WTC11 (cell line): ENCODE measurements at regions of chr10 and their contacts with region 1.

Region 1: GRCh38 chr10:117174439-117175214 is 22.7 kb upstream of the KCNK18 start:
- DNase-seq: peak; percentile 93
- ATAC-seq: peak; percentile 82
- H3K4me3 Mint-ChIP-seq: peak overlapping the region; percentile 78
- H3K27ac Mint-ChIP-seq: no peak overlapping the region
- H3K4me1 Mint-ChIP-seq: peaks cover 14% of the 10 kb centered on the region
- H3K27me3 Mint-ChIP-seq: peaks cover 95% of the 10 kb centered on the region
- CTCF ChIP-seq: peak; percentile 81

Region 2: GRCh38 chr10:116690356-116691322 is 484.0 kb before region 1 on chr10:
- CTCF ChIA-PET with region 1: interaction called, 21 read pairs
- POLR2A ChIA-PET with region 1: no interaction called
- DNase-seq: no peak
- ATAC-seq: peak; percentile 47
- H3K4me3 Mint-ChIP-seq: peak overlapping the region; percentile 46
- H3K27ac Mint-ChIP-seq: peak overlapping the region; percentile 19
- H3K4me1 Mint-ChIP-seq: peaks cover 58% of the 10 kb centered on the region
- H3K27me3 Mint-ChIP-seq: no peaks in the 10 kb centered on the region
- CTCF ChIP-seq: no peak

Region 3: DNA sequence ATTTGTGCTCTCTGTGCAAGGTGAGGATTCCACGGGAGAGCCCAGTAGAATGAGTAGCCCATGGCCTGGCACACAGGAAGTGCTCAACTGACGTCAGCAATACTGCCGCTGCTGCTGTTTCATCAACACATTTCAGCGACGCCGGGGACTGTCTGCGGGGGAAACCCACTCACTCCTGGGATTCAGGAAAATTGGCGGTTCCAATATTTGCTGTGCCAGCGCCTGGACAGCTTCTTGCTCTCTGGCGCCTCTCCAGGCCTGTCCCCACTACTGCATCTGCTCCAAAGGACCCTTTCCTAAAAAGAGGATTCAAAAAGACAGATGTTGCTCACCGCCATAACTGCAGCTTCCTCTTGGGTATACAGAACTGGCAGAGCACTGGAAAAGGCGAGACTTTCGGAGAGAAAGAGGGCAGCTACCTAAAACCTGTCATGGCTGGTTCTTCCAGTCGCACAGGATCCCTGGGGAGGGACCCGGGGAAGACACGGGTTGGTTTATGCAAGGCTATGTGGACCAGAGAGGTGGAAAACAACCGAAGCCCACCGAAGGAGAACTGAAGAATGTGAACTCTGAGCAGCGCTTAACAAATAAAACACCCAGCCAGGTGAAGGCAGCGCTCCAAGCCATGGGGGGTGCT is 365.0 kb before region 1 on chr10:
- CTCF ChIA-PET with region 1: interaction called, 30 read pairs
- POLR2A ChIA-PET with region 1: no interaction called
- DNase-seq: peak; percentile 75
- ATAC-seq: peak; percentile 93
- H3K4me3 Mint-ChIP-seq: no peak overlapping the region
- H3K27ac Mint-ChIP-seq: no peak overlapping the region
- H3K4me1 Mint-ChIP-seq: peaks cover 19% of the 10 kb centered on the region
- H3K27me3 Mint-ChIP-seq: no peaks in the 10 kb centered on the region
- CTCF ChIP-seq: peak; percentile 89

Region 4: DNA sequence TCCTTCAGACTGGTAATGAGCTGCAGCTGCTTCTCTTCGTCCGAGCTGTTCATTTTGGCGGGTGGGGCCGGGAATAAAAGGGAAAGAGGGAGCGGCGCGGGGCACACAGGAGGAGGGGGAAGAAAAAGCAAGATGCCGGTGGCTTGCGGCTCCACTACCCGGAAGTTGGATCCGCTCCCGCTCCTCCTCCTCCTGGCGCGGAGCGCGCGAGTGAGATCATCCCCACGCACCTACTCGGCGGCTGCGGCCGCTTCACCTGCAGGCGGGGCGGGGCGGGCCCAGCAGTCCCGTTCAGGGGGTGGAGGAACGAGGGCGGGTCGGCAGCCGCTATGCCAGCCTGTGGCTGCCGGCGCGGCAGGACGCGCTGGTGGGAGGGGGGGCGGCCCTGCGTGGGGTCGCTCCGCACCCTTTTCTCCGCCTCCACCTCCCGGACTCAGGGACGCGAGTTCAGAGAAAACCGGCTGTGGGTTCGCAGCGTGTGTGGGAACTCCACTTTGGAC is 169.6 kb before region 1 on chr10 and contains the start of gene SHTN1:
- CTCF ChIA-PET with region 1: interaction called, 10 read pairs
- POLR2A ChIA-PET with region 1: no interaction called
- DNase-seq: peak; percentile 65
- ATAC-seq: peak; percentile 71
- H3K4me3 Mint-ChIP-seq: peak within 1 kb of the TSS; percentile 76
- H3K27ac Mint-ChIP-seq: no peak within 1 kb of the TSS
- H3K4me1 Mint-ChIP-seq: peaks cover 14% of the 10 kb centered on the region
- H3K27me3 Mint-ChIP-seq: peaks cover 21% of the 10 kb centered on the region
- CTCF ChIP-seq: no peak
- total RNA-seq, gene SHTN1: 9.9 to 11.2 TPM (median 11.0 TPM) in 3 replicates

Region 5: DNA sequence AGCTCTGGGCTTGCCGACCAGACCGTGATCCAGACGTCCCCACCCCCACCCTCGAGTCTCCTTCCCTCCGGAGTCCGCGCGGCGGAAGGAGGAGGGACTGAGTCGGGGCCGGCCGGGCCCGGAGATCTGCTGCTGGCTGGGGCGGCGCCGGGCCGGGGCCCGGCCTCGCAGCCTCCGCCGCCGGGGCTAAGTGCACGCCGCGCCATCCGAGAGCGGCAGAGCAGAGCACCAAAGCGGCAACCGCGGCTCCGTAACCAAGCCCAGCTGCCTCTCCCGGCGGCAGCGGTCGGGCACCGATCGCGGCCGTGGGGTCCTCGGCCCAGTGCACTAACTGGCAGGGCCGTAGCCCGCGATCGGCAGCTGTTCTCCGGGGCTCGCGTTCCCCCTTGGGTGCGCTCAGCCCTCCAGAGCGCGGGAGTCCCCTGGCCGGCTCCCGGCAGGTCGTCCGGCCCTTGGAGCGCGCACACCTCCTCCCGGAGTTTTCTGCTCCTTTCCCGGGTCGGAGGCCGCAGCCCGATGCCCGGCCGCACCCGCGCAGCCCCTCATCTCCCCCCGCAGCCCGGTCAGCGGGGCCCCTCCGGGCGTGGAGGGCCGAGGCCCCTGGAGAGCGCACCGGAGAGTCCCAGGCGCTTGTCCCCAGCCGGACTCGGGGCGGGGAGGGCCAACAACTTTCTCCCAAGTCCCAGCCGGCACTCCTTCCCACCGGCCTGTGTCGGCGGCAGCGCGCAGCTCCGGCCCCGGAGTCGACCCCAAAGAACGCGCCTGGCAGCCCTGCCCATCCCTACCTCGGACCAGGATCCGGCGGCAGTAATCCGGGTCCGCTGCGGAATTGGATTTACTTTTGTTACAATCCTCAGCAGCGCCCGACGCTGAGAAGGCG is 37.4 kb before region 1 on chr10:
- CTCF ChIA-PET with region 1: interaction called, 72 read pairs
- POLR2A ChIA-PET with region 1: no interaction called
- DNase-seq: peak; percentile 60
- ATAC-seq: peak; percentile 5
- H3K4me3 Mint-ChIP-seq: peak overlapping the region; percentile 67
- H3K27ac Mint-ChIP-seq: no peak overlapping the region
- H3K4me1 Mint-ChIP-seq: peaks cover 54% of the 10 kb centered on the region
- H3K27me3 Mint-ChIP-seq: peaks cover 96% of the 10 kb centered on the region
- CTCF ChIP-seq: no peak

Region 6: GRCh38 chr10:117419921-117420320 is 245.3 kb after region 1 on chr10:
- CTCF ChIA-PET with region 1: no interaction called
- POLR2A ChIA-PET with region 1: no interaction called
- DNase-seq: no peak
- ATAC-seq: no peak
- H3K4me3 Mint-ChIP-seq: no peak overlapping the region
- H3K27ac Mint-ChIP-seq: no peak overlapping the region
- H3K4me1 Mint-ChIP-seq: peaks cover 10% of the 10 kb centered on the region
- H3K27me3 Mint-ChIP-seq: peaks cover 4% of the 10 kb centered on the region
- CTCF ChIP-seq: no peak